Adrenal gland (tissue), 19 donors: ENCODE measurements at regions of chr9 and their contacts with region 1.

Region 1: GRCh38 chr9:100401044-100401443 is 25.9 kb upstream of the MSANTD3 start:
- DNase-seq: no peak
- H3K4me3 ChIP-seq: no peak overlapping the region
- H3K27ac ChIP-seq: no peak overlapping the region
- H3K4me1 ChIP-seq: no peaks in the 10 kb centered on the region
- H3K27me3 ChIP-seq: no peaks in the 10 kb centered on the region
- CTCF ChIP-seq: no peak
- POLR2A ChIP-seq: no peak

Region 2: DNA sequence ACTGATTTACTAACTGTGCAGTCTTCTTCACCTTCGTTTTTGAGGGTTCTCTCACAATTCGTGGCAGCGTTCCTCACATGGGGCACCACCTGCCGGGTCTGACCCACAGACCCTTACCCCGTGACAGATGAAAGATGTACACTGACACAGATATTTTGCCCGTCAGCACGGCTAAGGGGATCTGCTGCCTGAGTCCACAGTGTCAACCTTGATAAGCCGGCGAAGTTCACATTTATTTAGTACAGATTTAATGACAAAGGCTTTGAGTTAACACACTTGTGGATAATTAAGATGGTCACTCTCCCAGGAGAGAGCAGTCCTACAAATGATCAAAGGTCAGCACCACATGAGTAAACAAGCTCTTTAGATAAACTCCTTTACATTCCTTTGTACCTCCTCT is 32.4 kb before region 1 on chr9:
- intact Hi-C with region 1: loop called in 1 of 2 experiments (anchors 5 kb)
- DNase-seq: no peak
- H3K4me3 ChIP-seq: no peak overlapping the region
- H3K27ac ChIP-seq: no peak overlapping the region
- H3K4me1 ChIP-seq: no peaks in the 10 kb centered on the region
- H3K27me3 ChIP-seq: no peaks in the 10 kb centered on the region
- CTCF ChIP-seq: no peak
- POLR2A ChIP-seq: no peak